ENCODE measurements at regions of chr16 and their contacts with region 1.

Region 1: GRCh38 chr16:84277237-84277823 is 17.3 kb upstream of the WFDC1 start:
- DNase-seq: peak; percentile 31 to 59
- ATAC-seq: peak; percentile 78 to 93; a peak in 5 of 6 replicates
- H3K4me3 ChIP-seq: no peak overlapping the region
- H3K27ac ChIP-seq: 0 out of 6 replicates have a peak overlapping the region, but pooled peaks of 1 of the 2 experiments have one; percentile 31
- H3K4me1 ChIP-seq: 0 out of 3 replicates have a peak, but pooled peaks cover 7% of the 10 kb centered on the region
- CTCF ChIP-seq: peak; percentile 94
- EP300 ChIP-seq: no peak
- POLR2A ChIP-seq: no peak
- RAD21 ChIP-seq: peak; percentile 86 to 92

Region 2: DNA sequence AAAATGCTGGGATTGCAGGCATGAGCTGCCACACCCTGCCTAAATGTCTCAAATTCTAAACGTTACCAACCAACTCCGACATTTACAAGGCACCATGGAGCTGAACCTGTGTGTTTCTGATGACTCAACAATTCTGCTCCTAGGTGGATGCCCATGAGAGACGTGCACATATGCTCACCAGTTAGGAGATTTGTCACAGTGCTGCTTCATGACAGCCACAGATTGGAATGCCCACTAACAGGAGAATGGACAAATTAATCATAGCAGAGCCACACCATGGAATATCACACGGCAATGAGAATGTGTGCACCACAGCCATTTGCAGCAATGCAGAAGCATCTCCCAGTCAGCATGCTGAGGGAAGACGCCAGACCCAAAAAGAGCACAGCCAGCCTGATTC is 29.5 kb before region 1 on chr16:
- CTCF ChIA-PET with region 1: interaction called, 22 read pairs
- POLR2A ChIA-PET with region 1: no interaction called
- DNase-seq: no peak
- ATAC-seq: no peak
- H3K4me3 ChIP-seq: no peak overlapping the region
- H3K27ac ChIP-seq: no peak overlapping the region
- H3K4me1 ChIP-seq: no peaks in the 10 kb centered on the region
- CTCF ChIP-seq: no peak
- EP300 ChIP-seq: no peak
- POLR2A ChIP-seq: no peak
- RAD21 ChIP-seq: no peak

Region 3: DNA sequence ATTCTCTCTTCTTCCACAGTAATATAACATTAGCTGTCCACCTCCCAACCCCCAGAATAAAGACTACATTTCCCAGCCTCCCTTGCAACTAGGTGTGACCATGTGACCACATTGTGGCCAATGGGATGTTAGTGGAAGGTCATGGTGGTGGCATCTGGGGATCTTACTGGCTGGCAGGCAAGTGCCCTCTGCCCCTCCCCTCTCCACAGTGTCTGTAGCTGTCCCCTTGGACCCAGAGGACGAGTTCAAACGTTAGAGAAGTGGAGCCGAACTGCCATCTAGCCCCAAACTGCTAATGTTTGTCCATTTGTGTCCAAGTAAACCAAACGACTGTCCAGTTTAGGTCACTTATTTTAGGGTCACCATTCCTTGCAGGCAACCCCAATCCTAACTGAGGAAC is 10.9 kb before region 1 on chr16:
- CTCF ChIA-PET with region 1: interaction called, 78 read pairs
- POLR2A ChIA-PET with region 1: no interaction called
- DNase-seq: peak; percentile 74 to 88
- ATAC-seq: peak; percentile 91 to 100
- H3K4me3 ChIP-seq: no peak overlapping the region
- H3K27ac ChIP-seq: peak overlapping the region in 1 of 2 experiments; percentile 9; a peak in 1 of 6 replicates
- H3K4me1 ChIP-seq: no peaks in the 10 kb centered on the region
- CTCF ChIP-seq: no peak
- EP300 ChIP-seq: no peak
- POLR2A ChIP-seq: no peak
- RAD21 ChIP-seq: no peak

Region 4: DNA sequence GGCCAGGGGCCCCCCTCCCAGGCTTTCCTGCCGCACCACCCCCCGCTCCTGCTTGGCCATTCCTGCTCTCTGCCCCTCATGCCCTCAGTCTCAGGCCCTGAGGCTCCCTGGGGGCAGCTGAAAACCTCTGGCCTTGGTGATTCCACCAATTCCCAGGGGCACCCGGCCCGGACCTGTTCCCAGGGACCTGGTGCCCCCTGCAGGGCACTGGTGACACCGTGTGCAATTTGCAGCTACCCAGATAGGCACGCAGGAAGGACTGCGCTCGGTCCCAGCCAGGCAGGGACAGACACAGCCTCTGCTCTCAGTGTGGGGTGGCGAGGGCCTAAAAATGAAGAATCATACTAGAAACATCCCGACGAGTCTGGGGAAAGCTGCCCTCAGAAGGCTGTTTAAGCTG is 30.8 kb after region 1 on chr16:
- CTCF ChIA-PET with region 1: interaction called, 24 read pairs
- POLR2A ChIA-PET with region 1: no interaction called
- DNase-seq: peak; percentile 64
- ATAC-seq: peak; percentile 87 to 96
- H3K4me3 ChIP-seq: no peak overlapping the region
- H3K27ac ChIP-seq: no peak overlapping the region
- H3K4me1 ChIP-seq: no peaks in the 10 kb centered on the region
- CTCF ChIP-seq: peak; percentile 64
- EP300 ChIP-seq: no peak
- POLR2A ChIP-seq: no peak
- RAD21 ChIP-seq: peak; percentile 72 to 81

Region 5: DNA sequence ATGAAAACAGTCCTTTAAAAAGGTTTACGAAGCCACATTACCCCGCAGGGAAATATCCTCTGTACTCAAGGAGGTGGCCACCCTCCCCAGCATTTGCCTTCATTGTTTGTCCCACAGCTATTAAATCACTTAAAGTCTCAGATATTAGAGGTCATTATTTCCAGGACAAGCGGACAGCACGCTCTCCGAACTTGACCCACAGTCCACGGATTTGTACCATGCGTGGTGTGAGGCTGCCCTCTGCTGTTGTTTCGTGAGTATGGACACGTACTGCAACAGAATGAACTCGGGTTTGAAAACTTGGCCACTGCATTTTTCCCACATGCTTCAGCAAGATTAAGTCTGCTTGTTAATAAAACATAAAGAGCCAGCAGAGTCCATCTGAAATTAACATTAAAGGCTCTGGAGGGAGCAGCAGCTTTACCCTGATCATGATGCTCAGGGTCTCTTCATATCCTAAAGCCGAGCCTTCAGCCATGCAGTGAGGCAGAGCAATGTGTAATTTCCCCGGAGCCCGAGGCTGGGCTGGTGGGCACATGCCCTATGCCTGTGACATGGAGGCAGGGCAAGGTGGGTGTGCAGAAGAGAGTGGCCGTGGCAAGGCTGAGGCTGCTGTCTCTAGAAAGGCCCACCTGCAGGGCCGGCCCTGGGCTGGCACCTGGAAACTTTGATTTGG is 207.4 kb after region 1 on chr16:
- CTCF ChIA-PET with region 1: interaction called, 245 read pairs
- POLR2A ChIA-PET with region 1: no interaction called
- DNase-seq: peak; percentile 47 to 62
- ATAC-seq: peak; percentile 68 to 87; a peak in 4 of 6 replicates
- H3K4me3 ChIP-seq: no peak overlapping the region
- H3K27ac ChIP-seq: no peak overlapping the region
- H3K4me1 ChIP-seq: no peaks in the 10 kb centered on the region
- CTCF ChIP-seq: peak; percentile 85
- EP300 ChIP-seq: no peak
- POLR2A ChIP-seq: no peak
- RAD21 ChIP-seq: peak; percentile 95 to 96

Region 6: GRCh38 chr16:84504420-84505248 is 227.3 kb after region 1 on chr16 and contains the start of gene MEAK7:
- CTCF ChIA-PET with region 1: interaction called, 43 read pairs
- POLR2A ChIA-PET with region 1: no interaction called
- DNase-seq: peak; percentile 98
- ATAC-seq: peak; percentile 89 to 94
- H3K4me3 ChIP-seq: peak within 1 kb of the TSS; percentile 74
- H3K27ac ChIP-seq: peak within 1 kb of the TSS; percentile 95 to 96
- H3K4me1 ChIP-seq: peaks cover 58% of the 10 kb centered on the region
- CTCF ChIP-seq: no peak
- EP300 ChIP-seq: no peak
- POLR2A ChIP-seq: peak; percentile 81
- RAD21 ChIP-seq: no peak
- polyA plus RNA-seq, gene MEAK7: 26.2 and 31.3 TPM in 2 replicates

Measured in A549 (cell line).